WTC11 (cell line): ENCODE measurements at regions of chr22 and their contacts with region 1.

Region 1: GRCh38 chr22:36301384-36301828 is 48.5 kb downstream of the APOL1 start:
- DNase-seq: peak; percentile 89
- ATAC-seq: peak; percentile 98
- H3K4me3 Mint-ChIP-seq: no peak overlapping the region
- H3K27ac Mint-ChIP-seq: peak overlapping the region; percentile 72
- H3K4me1 Mint-ChIP-seq: no peaks in the 10 kb centered on the region
- H3K27me3 Mint-ChIP-seq: no peaks in the 10 kb centered on the region
- CTCF ChIP-seq: peak; percentile 97

Region 2: DNA sequence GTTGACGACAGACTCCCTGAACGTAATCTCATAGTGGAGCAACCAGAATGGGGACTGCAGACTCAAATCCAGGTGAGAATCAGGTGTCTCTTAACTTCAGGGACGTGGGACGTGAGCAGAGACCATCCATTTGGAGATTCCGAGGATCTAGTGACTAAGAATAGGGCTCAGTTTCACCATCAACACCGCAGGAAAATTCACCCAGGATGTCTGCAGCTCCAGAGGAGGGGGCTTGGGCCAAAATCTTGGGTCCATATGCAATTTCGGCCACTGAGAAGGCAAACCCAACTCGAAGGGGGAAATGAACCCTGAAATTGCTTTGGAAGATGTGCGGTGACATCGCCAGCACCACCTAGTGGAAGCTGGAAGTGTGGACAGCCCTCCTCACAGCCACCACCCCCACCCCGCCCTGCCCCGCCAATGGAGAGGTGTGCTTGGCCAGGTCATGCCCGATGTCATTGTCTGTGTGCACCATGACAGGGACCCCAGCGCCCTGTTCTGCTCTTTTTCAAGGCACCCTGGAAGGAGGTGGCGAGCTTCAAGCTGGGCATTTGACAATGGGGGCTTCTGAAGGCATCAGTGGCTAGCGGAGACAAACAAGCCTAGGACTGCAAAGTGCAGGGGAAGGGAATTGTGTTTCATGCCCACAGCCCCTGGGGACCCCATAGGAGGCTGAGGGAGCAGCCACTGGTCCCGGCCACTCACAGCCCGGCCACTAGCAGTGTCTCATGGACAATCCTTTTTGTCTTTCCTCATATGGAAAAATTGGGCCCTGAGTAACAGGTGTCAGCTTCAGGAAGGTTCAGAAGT is 23.7 kb before region 1 on chr22:
- CTCF ChIA-PET with region 1: interaction called, 11 read pairs
- POLR2A ChIA-PET with region 1: no interaction called
- DNase-seq: peak; percentile 74
- ATAC-seq: peak; percentile 94
- H3K4me3 Mint-ChIP-seq: no peak overlapping the region; the same call in 1 of the 2 replicates
- H3K27ac Mint-ChIP-seq: peak overlapping the region; percentile 72
- H3K4me1 Mint-ChIP-seq: peaks cover 11% of the 10 kb centered on the region
- H3K27me3 Mint-ChIP-seq: no peaks in the 10 kb centered on the region
- CTCF ChIP-seq: peak; percentile 75

Region 3: DNA sequence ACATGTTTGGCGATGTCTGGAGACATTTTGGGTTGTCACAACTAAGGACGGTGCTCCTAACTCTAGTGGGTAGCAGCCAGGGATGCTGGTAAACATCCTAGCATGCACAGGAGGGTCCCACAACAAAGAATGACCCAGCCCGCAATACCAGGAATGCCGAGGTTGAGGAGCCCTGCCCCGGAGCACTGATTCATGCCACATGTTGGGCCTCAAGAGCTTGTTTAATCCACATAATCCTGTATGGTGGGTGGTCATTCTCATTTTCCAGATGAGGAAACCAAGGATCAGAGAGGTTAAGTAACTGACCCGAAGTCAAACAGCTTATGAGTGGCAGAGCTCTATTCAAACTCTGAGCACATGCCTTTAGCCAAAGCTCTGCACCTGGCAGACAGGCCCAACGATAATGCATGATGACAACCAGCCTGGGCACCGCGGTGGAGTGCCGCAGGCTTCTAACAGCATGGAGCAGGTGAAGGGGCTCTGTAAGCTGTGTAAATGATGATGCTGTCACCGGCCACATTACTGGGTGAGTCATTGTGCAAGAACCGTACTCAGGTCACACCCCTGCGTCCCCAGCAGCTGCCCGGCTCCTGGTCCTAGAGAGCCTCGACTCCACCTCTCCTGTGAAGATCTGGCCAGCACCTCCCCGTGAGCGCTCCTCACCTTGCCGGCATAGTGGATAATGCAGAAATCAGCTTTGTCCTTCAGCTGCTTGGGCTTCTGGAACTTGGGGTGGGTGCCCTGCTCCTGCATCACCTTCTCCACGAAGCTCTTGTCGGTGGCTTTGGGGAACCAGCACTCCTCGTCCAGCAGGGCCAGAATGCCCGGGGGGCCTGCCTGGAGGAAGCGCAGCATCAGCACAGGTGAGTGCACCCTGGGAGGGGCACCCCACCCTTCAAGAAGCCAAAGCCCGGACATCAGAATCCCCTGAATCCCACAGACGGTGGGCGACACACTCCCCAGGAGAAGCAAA is 10.3 kb after region 1 on chr22:
- CTCF ChIA-PET with region 1: interaction called, 11 read pairs
- POLR2A ChIA-PET with region 1: no interaction called
- DNase-seq: no peak
- ATAC-seq: no peak
- H3K4me3 Mint-ChIP-seq: no peak overlapping the region
- H3K27ac Mint-ChIP-seq: no peak overlapping the region
- H3K4me1 Mint-ChIP-seq: no peaks in the 10 kb centered on the region
- H3K27me3 Mint-ChIP-seq: no peaks in the 10 kb centered on the region
- CTCF ChIP-seq: no peak

Region 4: GRCh38 chr22:36443198-36443770 is 141.9 kb after region 1 on chr22:
- CTCF ChIA-PET with region 1: interaction called, 11 read pairs
- POLR2A ChIA-PET with region 1: no interaction called
- DNase-seq: no peak
- ATAC-seq: no peak
- H3K4me3 Mint-ChIP-seq: no peak overlapping the region
- H3K27ac Mint-ChIP-seq: no peak overlapping the region
- H3K4me1 Mint-ChIP-seq: peaks cover 26% of the 10 kb centered on the region
- H3K27me3 Mint-ChIP-seq: no peaks in the 10 kb centered on the region
- CTCF ChIP-seq: no peak

Region 5: DNA sequence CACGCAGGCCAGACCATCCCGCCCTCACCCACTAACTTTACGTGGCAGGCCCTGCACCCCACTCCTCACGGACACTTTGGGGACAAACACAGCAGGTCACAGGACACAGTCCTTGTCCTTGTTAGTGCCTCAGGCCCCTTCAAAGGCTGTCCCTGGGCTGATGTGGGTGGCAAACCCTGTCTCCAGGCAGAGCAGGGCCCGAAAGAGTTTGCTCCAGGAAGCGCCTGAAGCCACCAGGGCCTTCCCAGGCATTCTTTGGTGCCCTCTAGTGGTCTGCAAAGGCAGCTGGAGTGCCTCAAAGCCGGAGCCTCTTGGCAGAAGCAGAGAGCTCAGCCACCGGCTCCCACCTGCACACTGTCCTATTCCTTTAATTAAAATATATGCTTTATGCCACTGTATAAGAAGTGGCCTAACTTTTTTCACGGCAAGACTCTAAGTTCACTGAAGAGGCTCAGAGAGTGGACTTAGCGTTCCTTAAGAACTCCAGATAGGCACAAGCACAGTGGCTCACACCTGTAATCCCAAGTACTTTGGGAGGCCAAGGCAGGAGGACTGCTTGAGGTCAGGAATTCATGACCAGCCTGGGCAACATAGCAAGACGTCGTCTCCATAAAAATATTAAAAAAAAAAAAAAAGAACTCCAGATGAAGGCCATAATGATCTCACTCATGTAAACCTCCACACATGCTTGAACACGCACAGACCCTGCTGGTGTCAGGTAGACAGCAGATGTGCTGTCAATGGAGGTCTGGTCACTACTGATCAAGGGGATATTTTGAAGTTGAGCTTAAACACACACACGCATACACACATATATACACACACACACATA is 169.0 kb after region 1 on chr22:
- CTCF ChIA-PET with region 1: interaction called, 62 read pairs
- POLR2A ChIA-PET with region 1: no interaction called
- DNase-seq: peak; percentile 86
- ATAC-seq: peak; percentile 95
- H3K4me3 Mint-ChIP-seq: no peak overlapping the region
- H3K27ac Mint-ChIP-seq: peak overlapping the region; percentile 87
- H3K4me1 Mint-ChIP-seq: 0 out of 2 replicates have a peak, but pooled peaks cover 3% of the 10 kb centered on the region
- H3K27me3 Mint-ChIP-seq: no peaks in the 10 kb centered on the region
- CTCF ChIP-seq: peak; percentile 93